Naive thymus-derived CD4-positive, alpha-beta T cell (primary cell): ENCODE measurements at regions of chr1 and their contacts with region 1.

Region 1: DNA sequence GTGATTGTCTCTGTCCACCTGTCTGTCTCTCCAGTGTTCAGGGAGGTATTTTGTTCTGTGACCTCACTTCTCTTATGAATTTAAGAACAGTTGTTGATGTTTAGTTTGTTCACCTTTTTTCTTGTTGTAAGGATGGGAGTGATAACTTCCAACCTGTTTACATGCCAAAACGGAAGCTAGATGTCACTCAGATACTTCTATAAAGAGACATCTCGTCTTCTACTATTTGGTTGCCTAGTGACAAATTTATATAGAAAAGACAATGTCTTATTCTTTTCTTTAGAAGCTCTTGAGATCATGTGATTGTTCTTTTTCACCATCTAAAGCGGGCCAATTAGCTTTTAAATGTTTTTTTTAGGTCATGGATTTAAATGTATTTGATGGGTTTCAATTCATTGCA is 33.8 kb downstream of the PRSS38 start:
- DNase-seq: peak in 4 of 9 donors; percentile 6 to 32 (median 19)
- ATAC-seq: peak; percentile 27
- H3K4me3 ChIP-seq: no peak overlapping the region
- H3K4me3 Mint-ChIP-seq: no peak overlapping the region
- H3K27ac ChIP-seq: no peak overlapping the region
- H3K27ac Mint-ChIP-seq: peak overlapping the region in 2 of 9 donors; percentile 38 to 66
- H3K4me1 ChIP-seq: no peaks in the 10 kb centered on the region
- H3K4me1 Mint-ChIP-seq: peaks cover 0 to 13% (median 7%) of the 10 kb centered on the region in 7 donors
- H3K27me3 ChIP-seq: no peaks in the 10 kb centered on the region
- H3K27me3 Mint-ChIP-seq: peaks cover 0 to 7% (median 0%) of the 10 kb centered on the region in 5 donors

Region 2: DNA sequence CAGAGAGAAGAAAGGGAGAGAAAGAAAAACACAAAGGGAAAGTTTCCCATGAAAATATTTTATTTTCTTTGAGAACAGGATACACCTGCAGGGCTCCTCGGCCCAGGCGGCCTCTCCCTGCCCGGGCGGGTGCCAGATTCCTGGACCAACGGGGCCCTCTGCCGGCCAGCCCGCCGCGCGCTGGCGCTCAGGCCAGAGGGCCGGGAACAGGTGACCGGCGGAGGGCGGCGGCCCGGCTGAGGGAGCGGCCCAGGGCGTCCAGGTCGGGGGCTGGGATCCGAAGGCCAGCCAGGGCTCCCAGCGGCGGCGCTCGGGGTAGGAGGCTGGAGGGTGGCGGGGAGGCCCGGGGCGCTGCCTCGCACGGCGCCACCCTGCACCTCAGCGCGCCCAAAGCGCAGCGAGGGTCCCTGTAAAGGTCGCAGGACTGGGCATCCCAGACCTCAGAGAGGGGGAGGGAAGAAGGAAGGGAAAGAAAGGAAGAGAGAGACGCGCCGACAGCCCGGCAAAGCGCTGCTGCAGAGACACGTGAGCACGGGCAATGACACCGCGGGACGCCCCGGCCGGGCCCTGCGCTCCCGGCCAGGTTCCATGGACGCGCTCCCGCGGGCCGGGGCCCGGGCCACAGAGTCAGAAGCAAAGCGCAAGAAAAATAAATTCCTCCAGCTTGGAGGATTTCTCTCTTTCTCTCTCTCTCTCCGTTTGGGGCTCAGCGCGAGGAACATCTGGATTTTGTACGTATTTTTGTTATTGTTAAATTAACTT is 97.6 kb after region 1 on chr1:
- CTCF ChIA-PET with region 1: interaction called, 9 read pairs
- POLR2A ChIA-PET with region 1: no interaction called
- intact Hi-C with region 1: loop called in 1 of 2 experiments (anchors 1 kb)
- DNase-seq: peak in 8 of 9 donors; percentile 24 to 70 (median 60)
- ATAC-seq: peak; percentile 63
- H3K4me3 ChIP-seq: peak overlapping the region; percentile 17
- H3K4me3 Mint-ChIP-seq: peak overlapping the region; percentile 65 to 87 (median 74)
- H3K27ac ChIP-seq: no peak overlapping the region
- H3K27ac Mint-ChIP-seq: peak overlapping the region in 1 of 9 donors; percentile 23
- H3K4me1 ChIP-seq: peaks cover 0 to 7% of the 10 kb centered on the region in 2 donors
- H3K4me1 Mint-ChIP-seq: peaks cover 5 to 12% (median 8%) of the 10 kb centered on the region in 7 donors
- H3K27me3 ChIP-seq: no peaks in the 10 kb centered on the region
- H3K27me3 Mint-ChIP-seq: peaks cover 8 to 34% (median 13%) of the 10 kb centered on the region in 5 donors

Region 3: DNA sequence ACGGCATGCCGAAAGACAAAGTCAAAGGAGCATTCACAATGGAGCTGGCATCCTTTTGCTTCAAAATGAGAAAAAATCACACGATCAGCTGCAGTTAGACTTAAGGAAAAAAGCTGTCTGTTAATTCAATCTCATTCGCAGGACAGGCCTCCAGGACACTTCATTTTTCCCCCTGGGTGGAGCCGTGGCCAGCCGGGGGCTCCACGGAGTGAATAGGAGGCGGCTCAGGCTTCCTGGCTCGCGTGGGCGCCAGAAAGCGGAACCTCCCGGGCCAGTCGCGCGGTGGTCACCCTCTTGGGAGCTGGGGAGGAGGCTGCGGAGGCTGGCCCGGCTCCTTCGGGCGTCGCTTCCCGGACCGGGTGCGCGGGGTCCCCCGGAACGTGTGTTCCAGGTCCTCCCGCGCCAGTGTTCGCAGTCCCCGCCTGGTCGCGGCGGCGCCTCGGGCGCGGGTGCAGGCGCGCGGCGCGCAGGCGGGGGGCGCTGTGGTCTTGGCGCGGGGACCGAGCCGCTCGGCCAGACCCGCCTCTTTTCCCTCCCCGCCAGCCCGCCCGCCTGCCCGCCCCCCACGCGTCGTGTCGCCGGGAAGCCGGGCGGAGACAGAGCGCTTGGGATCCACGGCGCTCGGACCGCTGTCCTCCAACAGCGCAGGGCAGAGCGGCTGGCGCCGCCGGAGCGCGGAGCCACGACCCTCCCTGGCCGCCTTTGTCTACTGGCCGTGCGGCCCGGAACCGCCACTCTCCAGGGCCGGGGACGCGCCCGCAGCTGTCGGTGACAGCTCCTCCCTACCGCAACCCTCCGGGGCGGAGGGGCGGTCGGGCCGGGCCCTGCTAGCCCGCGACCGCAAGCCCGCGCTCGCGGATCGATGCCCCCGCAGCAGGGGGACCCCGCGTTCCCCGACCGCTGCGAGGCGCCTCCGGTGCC is 885.9 kb after region 1 on chr1 and contains the start of gene RHOU:
- CTCF ChIA-PET with region 1: no interaction called
- POLR2A ChIA-PET with region 1: no interaction called
- intact Hi-C with region 1: no loop called
- DNase-seq: peak; percentile 44 to 80 (median 71)
- ATAC-seq: peak; percentile 92
- H3K4me3 ChIP-seq: peak within 1 kb of the TSS; percentile 70
- H3K4me3 Mint-ChIP-seq: peak within 1 kb of the TSS; percentile 80 to 94 (median 90)
- H3K27ac ChIP-seq: peak within 1 kb of the TSS; percentile 27
- H3K27ac Mint-ChIP-seq: peak within 1 kb of the TSS; percentile 10 to 64 (median 45)
- H3K4me1 ChIP-seq: peaks cover 0 to 7% of the 10 kb centered on the region in 2 donors
- H3K4me1 Mint-ChIP-seq: peaks cover 9 to 34% (median 14%) of the 10 kb centered on the region in 7 donors
- H3K27me3 ChIP-seq: no peaks in the 10 kb centered on the region
- H3K27me3 Mint-ChIP-seq: peaks cover 0 to 52% (median 13%) of the 10 kb centered on the region in 5 donors
- total RNA-seq, gene RHOU: 1.3 to 6.5 (median 1.8) TPM